ENCODE measurements at regions of chr6 and their contacts with region 1.

Region 1: GRCh38 chr6:2876210-2877056 is 26.7 kb downstream of the SERPINB9 start:
- DNase-seq: peak; percentile 35
- ATAC-seq: peak; percentile 25
- H3K4me3 Mint-ChIP-seq: peak overlapping the region; percentile 74
- H3K27ac Mint-ChIP-seq: peak overlapping the region; percentile 86
- H3K4me1 Mint-ChIP-seq: peaks cover 72% of the 10 kb centered on the region
- H3K27me3 Mint-ChIP-seq: no peaks in the 10 kb centered on the region

Region 2: GRCh38 chr6:2861060-2861821 is 15.2 kb before region 1 on chr6:
- CTCF ChIA-PET with region 1: interaction called, 24 read pairs
- POLR2A ChIA-PET with region 1: interaction called, 24 read pairs
- DNase-seq: peak; percentile 57
- ATAC-seq: no peak
- H3K4me3 Mint-ChIP-seq: peak overlapping the region; percentile 44
- H3K27ac Mint-ChIP-seq: peak overlapping the region; percentile 89
- H3K4me1 Mint-ChIP-seq: peaks cover 87% of the 10 kb centered on the region
- H3K27me3 Mint-ChIP-seq: no peaks in the 10 kb centered on the region

Region 3: GRCh38 chr6:2866181-2866846 is 10.1 kb before region 1 on chr6:
- CTCF ChIA-PET with region 1: interaction called, 5 read pairs
- POLR2A ChIA-PET with region 1: interaction called, 24 read pairs
- DNase-seq: no peak
- ATAC-seq: no peak
- H3K4me3 Mint-ChIP-seq: no peak overlapping the region
- H3K27ac Mint-ChIP-seq: no peak overlapping the region
- H3K4me1 Mint-ChIP-seq: peaks cover 60% of the 10 kb centered on the region
- H3K27me3 Mint-ChIP-seq: no peaks in the 10 kb centered on the region

Region 4: GRCh38 chr6:2911171-2911570 is 34.7 kb after region 1 on chr6:
- CTCF ChIA-PET with region 1: interaction called, 15 read pairs
- POLR2A ChIA-PET with region 1: no interaction called
- DNase-seq: no peak
- ATAC-seq: no peak
- H3K4me3 Mint-ChIP-seq: no peak overlapping the region
- H3K27ac Mint-ChIP-seq: no peak overlapping the region
- H3K4me1 Mint-ChIP-seq: peaks cover 41% of the 10 kb centered on the region
- H3K27me3 Mint-ChIP-seq: no peaks in the 10 kb centered on the region

Region 5: GRCh38 chr6:2940010-2940850 is 63.8 kb after region 1 on chr6:
- CTCF ChIA-PET with region 1: interaction called, 3 read pairs
- POLR2A ChIA-PET with region 1: interaction called, 12 read pairs
- DNase-seq: peak; percentile 87
- ATAC-seq: peak; percentile 85
- H3K4me3 Mint-ChIP-seq: peak overlapping the region; percentile 74
- H3K27ac Mint-ChIP-seq: peak overlapping the region; percentile 94
- H3K4me1 Mint-ChIP-seq: peaks cover 68% of the 10 kb centered on the region
- H3K27me3 Mint-ChIP-seq: no peaks in the 10 kb centered on the region